Caco-2 (cell line): ENCODE measurements at regions of chr3 and their contacts with region 1.

Region 1: GRCh38 chr3:33131331-33132018 is 17.7 kb downstream of the CRTAP start:
- DNase-seq: peak; percentile 59 to 76
- H3K4me3 ChIP-seq: no peak overlapping the region
- H3K4me3 Mint-ChIP-seq: no peak overlapping the region
- H3K27ac Mint-ChIP-seq: peak overlapping the region; percentile 77
- H3K4me1 ChIP-seq: peaks cover 18% of the 10 kb centered on the region
- H3K4me1 Mint-ChIP-seq: no peaks in the 10 kb centered on the region
- H3K27me3 ChIP-seq: no peaks in the 10 kb centered on the region
- H3K27me3 Mint-ChIP-seq: no peaks in the 10 kb centered on the region
- CTCF ChIP-seq: peak; percentile 59 to 75

Region 2: GRCh38 chr3:33096093-33096868 is 35.2 kb before region 1 on chr3:
- CTCF ChIA-PET with region 1: interaction called, 3 read pairs
- POLR2A ChIA-PET with region 1: no interaction called
- intact Hi-C with region 1: loop called (anchors 2 kb)
- DNase-seq: peak in 1 of 2 experiments; percentile 45
- H3K4me3 ChIP-seq: peak overlapping the region; percentile 98
- H3K4me3 Mint-ChIP-seq: peak overlapping the region; percentile 95
- H3K27ac Mint-ChIP-seq: peak overlapping the region; percentile 84
- H3K4me1 ChIP-seq: peaks cover 17% of the 10 kb centered on the region
- H3K4me1 Mint-ChIP-seq: peaks cover 23% of the 10 kb centered on the region
- H3K27me3 ChIP-seq: no peaks in the 10 kb centered on the region
- H3K27me3 Mint-ChIP-seq: no peaks in the 10 kb centered on the region
- CTCF ChIP-seq: no peak

Region 3: DNA sequence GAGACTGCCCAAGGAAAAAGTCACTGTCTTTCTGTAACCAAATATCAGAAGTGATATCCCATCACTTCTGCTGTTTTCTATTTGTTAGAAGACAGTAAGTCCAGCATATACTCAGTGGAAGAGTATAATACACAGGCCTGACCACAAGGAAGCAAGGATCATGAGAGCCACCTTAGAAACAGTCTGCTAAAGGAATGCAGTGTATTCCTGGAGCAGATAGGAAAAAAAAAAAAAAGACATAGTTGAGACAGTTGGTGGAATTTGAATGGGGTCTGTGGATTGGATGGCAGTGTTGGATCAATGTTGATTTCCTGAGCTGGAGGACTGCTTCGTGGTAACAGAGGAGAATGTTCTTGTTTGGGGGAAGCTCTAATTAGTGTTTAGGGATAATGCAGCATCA is 119.2 kb after region 1 on chr3:
- CTCF ChIA-PET with region 1: interaction called, 6 read pairs
- POLR2A ChIA-PET with region 1: no interaction called
- intact Hi-C with region 1: loop called (anchors 1 kb)
- DNase-seq: no peak
- H3K4me3 ChIP-seq: no peak overlapping the region
- H3K4me3 Mint-ChIP-seq: no peak overlapping the region
- H3K27ac Mint-ChIP-seq: no peak overlapping the region
- H3K4me1 ChIP-seq: no peaks in the 10 kb centered on the region
- H3K4me1 Mint-ChIP-seq: no peaks in the 10 kb centered on the region
- H3K27me3 ChIP-seq: no peaks in the 10 kb centered on the region
- H3K27me3 Mint-ChIP-seq: peaks cover 2% of the 10 kb centered on the region
- CTCF ChIP-seq: no peak

Region 4: DNA sequence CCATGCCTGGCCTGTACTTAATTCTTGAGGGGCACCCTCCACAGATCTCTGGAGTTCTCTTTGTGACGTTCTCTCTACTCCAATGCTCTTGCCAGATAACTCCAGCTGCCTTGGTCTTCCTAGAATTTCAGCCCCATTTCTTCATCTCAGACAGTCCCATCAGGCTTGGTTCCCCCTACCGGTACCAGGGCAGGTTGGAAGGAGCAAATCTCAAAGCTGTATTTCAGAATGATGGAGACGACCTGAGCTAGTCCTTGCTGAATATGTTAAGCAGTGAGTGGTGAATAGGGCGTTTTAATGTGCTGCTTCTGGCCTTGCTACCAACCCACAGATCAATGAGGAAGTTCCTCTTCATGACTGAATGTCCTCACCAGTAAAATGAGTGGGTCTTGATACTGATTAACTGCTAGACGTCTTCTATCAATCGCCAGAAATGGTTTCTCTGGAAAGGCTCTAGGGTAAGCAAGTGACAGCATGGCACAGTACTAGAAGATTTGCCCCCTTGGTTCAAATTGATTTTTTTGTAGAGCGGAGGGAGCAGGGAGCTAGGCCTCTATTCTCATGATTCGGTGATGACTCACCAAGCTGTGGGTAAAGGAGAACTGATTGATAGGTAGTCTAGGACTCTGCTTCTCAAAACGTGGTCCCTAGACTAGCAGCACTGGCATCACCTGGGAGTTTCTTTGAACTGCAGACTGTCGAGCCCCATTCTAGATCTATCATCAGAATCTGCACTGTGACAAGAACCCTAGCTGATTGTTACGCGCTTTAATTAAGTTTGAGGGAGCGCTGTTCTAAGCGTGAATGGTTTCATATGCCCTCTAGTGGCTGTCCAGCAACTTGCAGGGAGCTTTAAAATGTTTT is 241.0 kb after region 1 on chr3:
- CTCF ChIA-PET with region 1: interaction called, 111 read pairs
- POLR2A ChIA-PET with region 1: interaction called, 7 read pairs
- intact Hi-C with region 1: loop called (anchors 1 kb)
- DNase-seq: peak in 1 of 2 experiments; percentile 53
- H3K4me3 ChIP-seq: no peak overlapping the region
- H3K4me3 Mint-ChIP-seq: no peak overlapping the region
- H3K27ac Mint-ChIP-seq: no peak overlapping the region
- H3K4me1 ChIP-seq: peaks cover 8% of the 10 kb centered on the region
- H3K4me1 Mint-ChIP-seq: no peaks in the 10 kb centered on the region
- H3K27me3 ChIP-seq: no peaks in the 10 kb centered on the region
- H3K27me3 Mint-ChIP-seq: no peaks in the 10 kb centered on the region
- CTCF ChIP-seq: peak; percentile 84

Region 5: DNA sequence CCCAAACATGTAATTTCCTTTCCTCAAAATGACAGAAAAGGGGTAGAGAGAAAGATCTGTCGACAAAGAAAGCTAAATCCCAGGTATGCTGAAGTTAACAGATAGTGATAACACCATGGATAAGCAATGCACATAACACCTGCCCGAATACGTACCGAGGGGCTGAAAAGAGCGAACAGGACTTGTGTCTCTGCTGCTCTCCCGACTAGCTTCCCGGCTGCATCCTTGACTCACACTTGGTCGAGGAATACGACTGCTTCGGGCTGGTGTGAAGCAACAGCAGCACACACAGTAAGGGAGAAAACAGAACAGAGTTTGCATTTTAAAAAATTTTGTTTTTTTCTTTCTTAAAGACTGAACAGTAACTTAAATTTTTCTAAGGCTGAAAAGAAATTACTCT is 450.2 kb after region 1 on chr3:
- CTCF ChIA-PET with region 1: no interaction called
- POLR2A ChIA-PET with region 1: no interaction called
- intact Hi-C with region 1: no loop called
- DNase-seq: peak; percentile 56 to 64
- H3K4me3 ChIP-seq: no peak overlapping the region
- H3K4me3 Mint-ChIP-seq: peak overlapping the region; percentile 30
- H3K27ac Mint-ChIP-seq: no peak overlapping the region
- H3K4me1 ChIP-seq: peaks cover 63% of the 10 kb centered on the region
- H3K4me1 Mint-ChIP-seq: peaks cover 16% of the 10 kb centered on the region
- H3K27me3 ChIP-seq: no peaks in the 10 kb centered on the region
- H3K27me3 Mint-ChIP-seq: no peaks in the 10 kb centered on the region
- CTCF ChIP-seq: no peak